ENCODE measurements at regions of chr13 and their contacts with region 1.

Region 1: DNA sequence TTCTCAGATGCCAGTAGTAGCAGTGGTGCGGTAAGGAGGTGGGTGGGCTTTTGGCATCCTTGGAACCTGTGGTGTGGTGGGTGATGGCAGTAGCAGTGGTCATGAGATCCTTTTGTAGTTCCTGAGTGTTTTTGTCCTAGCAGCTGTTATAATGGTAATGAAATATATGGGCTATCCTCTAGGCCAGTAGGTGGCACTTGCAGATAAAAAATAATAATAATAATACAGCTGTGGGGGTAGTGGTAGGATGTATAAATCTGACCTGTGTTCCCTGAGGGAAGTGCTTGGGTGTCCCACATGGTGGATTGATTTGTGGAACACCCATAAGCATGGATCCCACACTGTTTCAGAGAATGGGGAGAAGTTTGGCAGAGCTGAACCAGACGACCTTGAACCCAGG is 334.0 kb downstream of the SLITRK5 start:
- DNase-seq: peak; percentile 2
- ATAC-seq: no peak
- H3K4me3 ChIP-seq: no peak overlapping the region
- H3K27ac ChIP-seq: no peak overlapping the region
- H3K4me1 ChIP-seq: no peaks in the 10 kb centered on the region
- H3K27me3 ChIP-seq: no peaks in the 10 kb centered on the region
- CTCF ChIP-seq: peak; percentile 34; the same call in 1 of the 2 replicates

Region 2: DNA sequence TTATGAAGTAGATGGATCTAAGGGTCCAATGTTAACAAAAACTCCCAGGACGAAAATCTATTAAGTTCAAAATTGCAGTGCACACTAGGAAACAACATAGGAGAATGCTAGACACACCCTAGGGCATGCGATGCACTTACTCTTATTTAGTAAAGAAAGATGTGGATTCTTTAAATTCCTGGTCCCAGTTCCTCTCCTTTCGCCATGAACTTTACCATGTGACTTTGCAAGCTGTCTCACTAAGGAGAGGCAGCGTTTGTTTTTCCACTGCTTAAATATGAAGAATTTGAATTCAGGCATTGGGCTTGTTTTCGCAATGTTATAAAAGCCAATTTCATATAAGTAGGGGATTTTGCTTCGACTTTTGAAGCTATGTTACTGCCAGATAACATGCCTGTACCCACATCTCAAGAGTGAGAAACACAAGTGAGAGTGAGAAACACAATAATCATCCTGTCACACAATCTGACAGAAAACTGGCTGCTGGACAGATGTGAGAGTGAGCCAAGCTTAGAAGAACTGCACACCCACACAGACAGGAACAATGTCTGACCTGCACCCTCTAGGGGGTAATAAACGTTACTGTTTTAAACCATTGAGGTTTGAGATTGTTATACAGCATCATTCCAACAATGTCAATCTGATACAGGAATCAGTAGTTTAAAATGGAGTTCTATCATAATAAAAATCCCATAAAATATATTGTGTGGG is 974.4 kb after region 1 on chr13:
- CTCF ChIA-PET with region 1: no interaction called
- POLR2A ChIA-PET with region 1: no interaction called
- intact Hi-C with region 1: loop called (anchors 2 kb)
- DNase-seq: peak; percentile 3
- ATAC-seq: peak; percentile 54
- H3K4me3 ChIP-seq: no peak overlapping the region
- H3K27ac ChIP-seq: no peak overlapping the region
- H3K4me1 ChIP-seq: no peaks in the 10 kb centered on the region
- H3K27me3 ChIP-seq: no peaks in the 10 kb centered on the region
- CTCF ChIP-seq: peak; percentile 31